Activated CD8-positive, alpha-beta T cell treated with anti-CD3 and anti-CD28 coated beads, Interleukin-2, amount 10 ng/mL, durations not matched to agents 7 days and 5 days (primary cell): ENCODE measurements at regions of chr5 and their contacts with region 1.

Region 1: GRCh38 chr5:154179846-154180710 is 10.5 kb upstream of the GALNT10 start:
- DNase-seq: peak; percentile 62
- ATAC-seq: peak; percentile 94
- H3K4me3 Mint-ChIP-seq: no peak overlapping the region
- H3K27ac Mint-ChIP-seq: no peak overlapping the region
- H3K4me1 Mint-ChIP-seq: peaks cover 6% of the 10 kb centered on the region
- H3K27me3 Mint-ChIP-seq: peaks cover 31% of the 10 kb centered on the region

Region 2: DNA sequence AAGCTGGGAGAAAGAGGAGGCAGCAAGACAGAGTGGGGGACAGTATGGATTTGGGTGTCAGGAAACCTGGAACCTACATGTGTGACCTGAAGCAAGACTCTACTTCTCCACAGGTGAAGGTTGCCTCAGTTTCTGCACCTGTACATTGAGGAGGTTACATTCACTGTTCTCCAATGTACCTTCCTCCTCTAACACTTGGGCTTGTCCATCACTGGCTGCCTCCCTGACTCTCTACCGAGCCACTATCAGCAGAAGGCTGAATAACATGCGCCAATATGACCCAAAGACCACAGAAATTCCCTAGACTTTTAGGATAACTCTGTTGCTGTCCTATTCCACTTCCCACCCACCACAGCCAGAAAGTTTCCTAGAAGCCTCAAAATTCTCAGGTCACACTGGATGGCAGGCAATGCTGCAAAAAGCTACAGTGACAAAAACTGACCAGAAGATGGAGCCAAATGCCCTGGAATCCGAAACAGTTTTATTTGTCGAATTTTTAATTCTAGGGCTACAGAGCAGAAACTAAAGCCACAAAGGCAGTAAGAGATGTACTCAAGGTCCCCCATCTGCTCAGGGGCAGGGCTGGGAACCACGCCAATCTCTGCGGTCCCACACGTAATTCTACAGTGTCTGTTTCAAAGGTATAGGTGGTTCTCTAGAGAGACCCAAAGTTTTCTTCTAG is 205.8 kb before region 1 on chr5:
- CTCF ChIA-PET with region 1: interaction called, 32 read pairs
- POLR2A ChIA-PET with region 1: no interaction called
- DNase-seq: peak; percentile 62
- ATAC-seq: peak; percentile 69
- H3K4me3 Mint-ChIP-seq: no peak overlapping the region
- H3K27ac Mint-ChIP-seq: no peak overlapping the region
- H3K4me1 Mint-ChIP-seq: peaks cover 3% of the 10 kb centered on the region
- H3K27me3 Mint-ChIP-seq: peaks cover 9% of the 10 kb centered on the region

Region 3: DNA sequence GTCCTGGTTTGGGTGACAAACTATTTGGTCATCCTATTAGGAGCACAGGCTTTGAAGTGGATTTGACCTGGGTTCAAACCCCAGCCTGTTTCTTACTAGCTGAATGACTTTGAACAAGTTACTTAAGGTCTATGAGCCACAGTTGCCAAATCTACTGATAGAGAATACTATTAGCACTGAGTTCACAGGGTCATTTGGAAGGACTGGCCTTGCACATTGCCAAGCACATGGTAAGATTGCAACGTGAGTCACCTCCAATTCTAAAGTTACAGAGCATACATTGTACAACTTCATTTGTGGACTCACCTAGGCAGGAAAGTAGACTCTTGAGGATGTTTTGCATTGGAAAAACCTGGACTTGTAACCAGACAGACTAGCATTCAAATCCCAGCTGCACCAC is 102.4 kb before region 1 on chr5:
- CTCF ChIA-PET with region 1: interaction called, 153 read pairs
- POLR2A ChIA-PET with region 1: no interaction called
- DNase-seq: no peak
- ATAC-seq: no peak
- H3K4me3 Mint-ChIP-seq: no peak overlapping the region
- H3K27ac Mint-ChIP-seq: no peak overlapping the region
- H3K4me1 Mint-ChIP-seq: peaks cover 43% of the 10 kb centered on the region
- H3K27me3 Mint-ChIP-seq: no peaks in the 10 kb centered on the region

Region 4: DNA sequence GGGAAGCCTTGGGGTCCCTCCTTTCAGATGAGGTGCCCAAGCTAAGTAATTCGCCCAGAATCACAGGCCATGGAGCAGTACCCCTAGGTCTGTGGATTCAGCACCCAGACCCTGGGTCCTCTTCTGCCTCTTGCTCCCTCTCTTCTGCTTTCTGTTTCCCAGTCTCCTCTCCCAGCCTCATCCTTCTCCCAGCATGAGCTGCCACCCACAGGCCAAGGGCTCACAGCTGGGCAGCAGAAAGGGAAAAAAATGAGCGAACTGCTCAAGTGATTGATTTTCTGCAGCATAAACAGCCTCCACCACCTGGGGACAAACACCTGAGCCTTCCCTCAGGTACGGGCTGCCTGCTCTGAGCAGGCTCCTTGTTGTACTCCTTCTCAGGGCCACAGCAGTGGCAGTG is 151.8 kb after region 1 on chr5:
- CTCF ChIA-PET with region 1: no interaction called
- POLR2A ChIA-PET with region 1: no interaction called
- DNase-seq: no peak
- ATAC-seq: no peak
- H3K4me3 Mint-ChIP-seq: no peak overlapping the region
- H3K27ac Mint-ChIP-seq: no peak overlapping the region
- H3K4me1 Mint-ChIP-seq: no peaks in the 10 kb centered on the region
- H3K27me3 Mint-ChIP-seq: no peaks in the 10 kb centered on the region